Activated naive CD4-positive, alpha-beta T cell treated with anti-CD3 and anti-CD28 coated beads for 36 hours (primary cell): ENCODE measurements at regions of chr11 and their contacts with region 1.

Region 1: GRCh38 chr11:33362051-33362910 is 105.1 kb downstream of the HIPK3 start:
- DNase-seq: peak; percentile 16
- H3K4me3 Mint-ChIP-seq: no peak overlapping the region
- H3K27ac Mint-ChIP-seq: no peak overlapping the region
- H3K4me1 Mint-ChIP-seq: no peaks in the 10 kb centered on the region
- H3K27me3 Mint-ChIP-seq: peaks cover 8% of the 10 kb centered on the region

Region 2: DNA sequence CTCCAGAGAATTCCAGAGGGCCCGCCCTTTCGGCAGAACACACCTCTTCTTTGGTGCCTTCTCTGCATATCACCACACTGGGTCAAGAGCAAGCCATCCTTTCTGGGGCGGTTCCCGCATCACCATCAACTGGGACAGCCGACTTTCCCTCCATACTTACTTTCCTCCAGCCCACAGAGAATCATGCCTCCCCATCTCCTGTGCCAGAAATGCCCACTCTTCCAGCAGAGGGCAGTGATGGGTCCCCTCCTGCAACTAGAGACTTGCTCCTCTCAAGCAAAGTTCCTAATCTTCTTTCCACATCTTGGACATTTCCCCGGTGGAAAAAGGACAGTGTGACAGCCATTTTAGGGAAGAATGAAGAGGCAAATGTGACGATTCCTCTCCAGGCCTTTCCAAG is 180.6 kb after region 1 on chr11:
- CTCF ChIA-PET with region 1: interaction called, 4 read pairs
- intact Hi-C with region 1: loop called (anchors 5 kb)
- DNase-seq: peak; percentile 62
- H3K4me3 Mint-ChIP-seq: no peak overlapping the region
- H3K27ac Mint-ChIP-seq: no peak overlapping the region
- H3K4me1 Mint-ChIP-seq: no peaks in the 10 kb centered on the region
- H3K27me3 Mint-ChIP-seq: peaks cover 23% of the 10 kb centered on the region

Region 3: GRCh38 chr11:33687733-33688479 is 325.6 kb after region 1 on chr11:
- CTCF ChIA-PET with region 1: interaction called, 4 read pairs
- intact Hi-C with region 1: loop called (anchors 1 kb)
- DNase-seq: peak; percentile 36
- H3K4me3 Mint-ChIP-seq: no peak overlapping the region
- H3K27ac Mint-ChIP-seq: no peak overlapping the region
- H3K4me1 Mint-ChIP-seq: peaks cover 3% of the 10 kb centered on the region
- H3K27me3 Mint-ChIP-seq: peaks cover 12% of the 10 kb centered on the region

Region 4: GRCh38 chr11:33742249-33742851 is 380.1 kb after region 1 on chr11:
- CTCF ChIA-PET with region 1: interaction called, 17 read pairs
- intact Hi-C with region 1: loop called (anchors 1 kb)
- DNase-seq: no peak
- H3K4me3 Mint-ChIP-seq: no peak overlapping the region
- H3K27ac Mint-ChIP-seq: no peak overlapping the region
- H3K4me1 Mint-ChIP-seq: peaks cover 5% of the 10 kb centered on the region
- H3K27me3 Mint-ChIP-seq: no peaks in the 10 kb centered on the region

Region 5: GRCh38 chr11:33829433-33830141 is 467.3 kb after region 1 on chr11:
- CTCF ChIA-PET with region 1: interaction called, 3 read pairs
- intact Hi-C with region 1: loop called (anchors 1 kb)
- DNase-seq: peak; percentile 85
- H3K4me3 Mint-ChIP-seq: peak overlapping the region; percentile 57
- H3K27ac Mint-ChIP-seq: no peak overlapping the region
- H3K4me1 Mint-ChIP-seq: peaks cover 2% of the 10 kb centered on the region
- H3K27me3 Mint-ChIP-seq: peaks cover 42% of the 10 kb centered on the region

Region 6: DNA sequence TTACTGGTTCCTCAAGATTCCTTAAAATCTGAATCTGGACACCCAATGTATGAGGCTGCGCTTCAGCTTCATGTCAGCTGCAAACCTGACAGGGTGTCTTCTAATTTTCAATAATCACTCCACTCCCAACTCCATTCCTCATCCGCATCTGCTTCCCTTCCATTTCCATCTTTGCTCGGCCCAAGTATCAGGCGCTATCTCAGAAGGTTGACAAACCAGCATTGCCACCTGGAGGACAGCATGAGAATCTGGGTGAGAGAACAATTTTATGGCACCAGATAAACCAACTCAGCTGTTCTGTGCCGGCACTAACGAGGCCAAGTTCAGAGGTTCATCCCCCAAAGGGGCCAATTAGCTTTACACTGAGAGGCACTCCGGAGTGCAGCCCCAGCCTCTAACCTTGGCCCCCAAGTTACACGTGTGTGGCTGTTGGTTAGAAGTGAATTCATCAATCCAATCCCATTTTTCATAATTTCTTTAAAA is 608.7 kb after region 1 on chr11:
- CTCF ChIA-PET with region 1: no interaction called
- intact Hi-C with region 1: loop called (anchors 10 kb)
- DNase-seq: peak; percentile 48
- H3K4me3 Mint-ChIP-seq: no peak overlapping the region
- H3K27ac Mint-ChIP-seq: no peak overlapping the region
- H3K4me1 Mint-ChIP-seq: peaks cover 2% of the 10 kb centered on the region
- H3K27me3 Mint-ChIP-seq: peaks cover 7% of the 10 kb centered on the region